GM18951 (cell line): ENCODE measurements at regions of chr1 and their contacts with region 1.

Region 1: DNA sequence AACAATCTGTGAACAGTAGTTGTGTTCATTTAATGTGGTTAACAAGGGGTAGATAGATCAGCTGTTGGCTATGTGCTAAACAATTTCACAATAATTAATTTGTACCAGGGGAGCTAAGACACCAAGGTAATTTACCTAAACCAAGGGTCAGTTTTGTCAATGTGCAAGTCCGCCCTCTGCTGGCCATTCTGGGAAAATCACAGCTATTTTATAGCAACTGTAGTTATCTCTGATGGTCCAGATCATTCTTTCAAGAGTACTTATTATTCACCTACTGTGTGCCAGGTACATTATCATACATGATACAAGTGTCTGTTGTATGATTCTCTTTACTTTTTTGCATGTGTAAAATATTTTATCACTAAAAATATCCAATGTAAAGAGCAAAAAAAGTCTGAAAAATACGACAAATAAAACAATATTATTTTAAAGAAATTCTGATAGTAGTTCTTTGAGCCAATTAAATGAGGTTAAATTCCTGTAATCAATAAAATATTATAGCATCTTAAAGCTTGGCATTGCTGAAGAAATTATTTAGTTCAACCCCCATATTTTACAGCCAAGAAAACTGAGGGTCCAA is 312.3 kb upstream of the FAM78B start:
- POLR2A ChIP-seq: no peak

Region 2: DNA sequence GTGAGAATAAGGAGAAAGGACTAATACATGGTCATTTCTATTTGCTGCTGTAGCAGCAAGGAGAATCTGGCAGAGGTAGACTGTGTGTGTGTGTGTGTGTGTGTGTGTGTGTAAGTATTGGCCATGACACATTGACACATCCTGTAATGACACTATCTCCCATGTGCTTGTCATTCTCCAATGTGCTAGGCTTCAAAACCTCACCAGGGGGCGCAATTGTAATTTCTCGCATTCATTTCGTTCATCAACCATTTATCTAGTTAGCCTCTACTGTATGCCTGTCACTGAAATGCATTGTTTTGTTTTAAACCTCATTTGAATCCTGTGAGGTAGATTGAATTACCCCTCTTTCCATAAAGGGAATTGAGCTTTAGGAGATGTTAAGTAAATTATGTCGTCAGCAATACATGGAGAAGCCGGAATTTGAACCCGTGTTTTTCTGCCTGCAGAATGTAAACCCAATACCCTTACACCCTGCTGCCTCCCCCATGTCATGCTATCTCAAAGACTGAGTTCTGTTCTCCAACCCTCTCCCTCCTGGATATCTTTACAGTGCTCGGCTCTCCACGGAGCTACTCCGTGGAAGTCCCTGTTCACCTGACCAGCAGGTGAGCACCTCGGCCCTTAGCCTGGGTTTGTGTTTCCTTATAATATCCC is 550.9 kb before region 1 on chr1:
- in situ Hi-C with region 1: loop called (anchors 25 kb)
- POLR2A ChIP-seq: no peak

Region 3: DNA sequence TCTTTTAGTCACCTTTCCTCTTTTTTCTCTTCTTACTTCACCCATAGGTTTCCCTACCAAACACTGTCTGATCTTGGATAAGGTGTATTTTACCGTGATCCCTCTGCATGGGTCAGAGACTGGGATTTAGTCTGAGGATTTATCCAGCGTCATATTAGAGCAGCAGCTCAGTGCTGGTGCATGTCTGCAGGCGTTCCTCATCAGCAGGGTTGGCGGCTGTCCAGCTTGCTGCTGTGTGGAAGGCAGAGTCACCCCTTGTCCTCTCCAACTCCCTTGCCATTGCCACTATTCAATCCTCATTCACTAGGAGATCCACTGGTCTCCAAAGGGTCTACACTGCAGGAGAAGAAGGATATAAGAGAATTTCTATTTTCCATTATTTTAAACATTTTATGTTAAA is 305.0 kb before region 1 on chr1:
- in situ Hi-C with region 1: no loop called
- POLR2A ChIP-seq: no peak